ENCODE measurements at regions of chr3 and their contacts with region 1.

Region 1: GRCh38 chr3:58008140-58009025 is at the start of gene FLNB:
- DNase-seq: peak; percentile 90
- total RNA-seq, gene FLNB: 130 to 133 TPM

Region 2: GRCh38 chr3:57889807-57890206 is 118.6 kb before region 1 on chr3:
- intact Hi-C with region 1: loop called in 1 of 2 experiments (anchors 10 kb)
- DNase-seq: no peak

Region 3: GRCh38 chr3:58049143-58049785 is 40.9 kb after region 1 on chr3:
- intact Hi-C with region 1: loop called in 1 of 2 experiments (anchors 5 kb)
- DNase-seq: no peak

Region 4: GRCh38 chr3:58167431-58168351 is 159.3 kb after region 1 on chr3:
- intact Hi-C with region 1: loop called in 1 of 2 experiments (anchors 10 kb)
- DNase-seq: peak; percentile 91